CD4-positive, alpha-beta T cell (primary cell): ENCODE measurements at regions of chr12 and their contacts with region 1.

Region 1: GRCh38 chr12:120469450-120470149 is at the start of gene SRSF9:
- DNase-seq: peak; percentile 94 to 99 (median 97)
- ATAC-seq: peak; percentile 86
- H3K4me3 ChIP-seq: peak within 1 kb of the TSS; percentile 57
- H3K4me3 Mint-ChIP-seq: peak within 1 kb of the TSS; percentile 90
- H3K27ac ChIP-seq: peak within 1 kb of the TSS; percentile 72 to 77
- H3K27ac Mint-ChIP-seq: peak within 1 kb of the TSS; percentile 87
- H3K4me1 ChIP-seq: peaks cover 39% of the 10 kb centered on the region
- H3K4me1 Mint-ChIP-seq: peaks cover 46% of the 10 kb centered on the region
- H3K27me3 ChIP-seq: no peaks in the 10 kb centered on the region
- H3K27me3 Mint-ChIP-seq: no peaks in the 10 kb centered on the region
- CTCF ChIP-seq: peak; percentile 91
- total RNA-seq, gene SRSF9: 124 TPM

Region 2: DNA sequence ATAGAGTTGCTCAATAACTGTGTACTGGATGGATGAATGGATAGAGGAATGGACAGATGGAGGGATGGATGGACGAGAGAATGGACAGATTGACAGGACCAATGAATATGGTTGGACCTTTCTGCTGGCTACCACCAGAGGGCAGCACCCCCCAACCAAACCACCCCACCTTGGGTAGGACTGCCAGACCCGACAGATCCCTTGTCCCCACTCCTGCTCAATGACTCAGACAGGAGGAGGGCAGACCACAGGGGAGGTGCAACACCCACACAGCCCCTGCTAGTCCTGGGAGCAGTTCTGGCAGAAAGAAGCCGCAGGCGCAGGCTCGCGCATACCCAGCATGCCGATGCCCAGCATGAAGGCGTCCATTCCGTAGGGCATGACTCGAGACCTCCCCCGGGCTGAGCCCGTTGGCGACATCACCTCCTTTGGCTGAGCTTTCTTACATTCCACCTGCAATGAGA is 113.0 kb before region 1 on chr12:
- CTCF ChIA-PET with region 1: interaction called, 4 read pairs
- POLR2A ChIA-PET with region 1: no interaction called
- intact Hi-C with region 1: loop called (anchors 1 to 2 kb)
- DNase-seq: peak; percentile 56 to 81 (median 65)
- ATAC-seq: peak; percentile 88
- H3K4me3 ChIP-seq: no peak overlapping the region
- H3K4me3 Mint-ChIP-seq: no peak overlapping the region
- H3K27ac ChIP-seq: no peak overlapping the region
- H3K27ac Mint-ChIP-seq: no peak overlapping the region
- H3K4me1 ChIP-seq: peaks cover 5% of the 10 kb centered on the region
- H3K4me1 Mint-ChIP-seq: no peaks in the 10 kb centered on the region
- H3K27me3 ChIP-seq: peaks cover 18 to 28% of the 10 kb centered on the region in 2 experiments
- H3K27me3 Mint-ChIP-seq: peaks cover 54% of the 10 kb centered on the region
- CTCF ChIP-seq: peak; percentile 91

Region 3: GRCh38 chr12:120445911-120446843 is 23.4 kb before region 1 on chr12 and contains the starts of genes GATC and TRIAP1:
- CTCF ChIA-PET with region 1: interaction called, 15 read pairs
- POLR2A ChIA-PET with region 1: interaction called, 6 read pairs
- intact Hi-C with region 1: loop called in 1 of 2 experiments (anchors 2 kb)
- DNase-seq: peak; percentile 68 to 94 (median 83)
- ATAC-seq: peak; percentile 95
- H3K4me3 ChIP-seq: peak within 1 kb of the TSS; percentile 100
- H3K4me3 Mint-ChIP-seq: peak within 1 kb of the TSS; percentile 100
- H3K27ac ChIP-seq: peak within 1 kb of the TSS; percentile 80 to 92
- H3K27ac Mint-ChIP-seq: peak within 1 kb of the TSS; percentile 98
- H3K4me1 ChIP-seq: peaks cover 37% of the 10 kb centered on the region
- H3K4me1 Mint-ChIP-seq: peaks cover 39% of the 10 kb centered on the region
- H3K27me3 ChIP-seq: no peaks in the 10 kb centered on the region
- H3K27me3 Mint-ChIP-seq: no peaks in the 10 kb centered on the region
- CTCF ChIP-seq: no peak
- total RNA-seq, gene GATC: 18.6 to 19.4 TPM
- total RNA-seq, gene TRIAP1: 33.0 to 34.3 TPM

Region 4: GRCh38 chr12:120495723-120496412 is 26.3 kb after region 1 on chr12 and contains the start of gene DYNLL1:
- CTCF ChIA-PET with region 1: interaction called, 14 read pairs
- POLR2A ChIA-PET with region 1: interaction called, 27 read pairs
- intact Hi-C with region 1: loop called (anchors 1 to 2 kb)
- DNase-seq: peak; percentile 95 to 98 (median 97)
- ATAC-seq: peak; percentile 96
- H3K4me3 ChIP-seq: peak within 1 kb of the TSS; percentile 82
- H3K4me3 Mint-ChIP-seq: peak within 1 kb of the TSS; percentile 92
- H3K27ac ChIP-seq: peak within 1 kb of the TSS; percentile 74 to 79
- H3K27ac Mint-ChIP-seq: peak within 1 kb of the TSS; percentile 82
- H3K4me1 ChIP-seq: peaks cover 18% of the 10 kb centered on the region
- H3K4me1 Mint-ChIP-seq: peaks cover 44% of the 10 kb centered on the region
- H3K27me3 ChIP-seq: no peaks in the 10 kb centered on the region
- H3K27me3 Mint-ChIP-seq: no peaks in the 10 kb centered on the region
- CTCF ChIP-seq: no peak
- total RNA-seq, gene DYNLL1: 23.6 to 24.5 TPM

Region 5: DNA sequence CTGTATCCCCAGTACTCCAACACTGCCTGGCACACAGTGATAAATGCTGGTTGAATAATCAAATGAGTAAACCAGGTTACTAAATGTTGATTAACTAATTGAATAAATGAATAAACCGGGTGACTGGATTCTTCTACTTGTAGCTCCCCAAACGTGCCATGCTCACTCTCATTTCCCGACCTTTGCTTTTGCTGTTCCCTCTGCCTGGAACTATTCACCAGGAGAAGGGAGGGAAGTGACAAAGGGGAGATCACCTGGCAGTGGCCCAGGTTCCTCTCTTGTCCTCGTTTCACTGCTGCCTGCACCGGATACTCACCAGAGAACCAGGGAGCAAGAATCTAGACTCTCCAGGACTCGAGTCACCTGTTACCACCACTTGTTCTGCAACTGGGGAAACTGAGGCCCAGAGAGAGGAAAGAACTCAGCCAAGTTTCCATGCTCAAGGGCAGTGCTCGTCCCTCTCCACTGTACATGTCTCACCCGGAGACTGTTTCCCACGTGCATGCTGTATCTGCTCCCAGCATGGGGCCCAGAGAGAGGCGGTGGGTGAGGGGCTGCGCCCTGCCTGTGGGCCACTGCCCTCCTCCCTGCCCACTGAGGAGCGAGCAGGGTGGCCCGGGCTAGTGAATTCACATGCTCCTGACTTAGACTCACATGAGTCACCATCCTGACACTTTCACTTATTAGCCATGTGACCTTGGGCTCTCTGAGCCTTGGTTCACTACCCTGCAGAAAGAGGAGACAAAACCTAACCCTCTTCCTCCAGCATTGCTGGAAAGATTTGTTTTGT is 129.3 kb after region 1 on chr12:
- CTCF ChIA-PET with region 1: no interaction called
- POLR2A ChIA-PET with region 1: no interaction called
- intact Hi-C with region 1: no loop called
- DNase-seq: peak in 2 of 14 experiments; percentile 47 to 56
- ATAC-seq: no peak
- H3K4me3 ChIP-seq: no peak overlapping the region
- H3K4me3 Mint-ChIP-seq: no peak overlapping the region
- H3K27ac ChIP-seq: no peak overlapping the region
- H3K27ac Mint-ChIP-seq: no peak overlapping the region
- H3K4me1 ChIP-seq: no peaks in the 10 kb centered on the region
- H3K4me1 Mint-ChIP-seq: no peaks in the 10 kb centered on the region
- H3K27me3 ChIP-seq: peaks cover 3 to 4% of the 10 kb centered on the region in 2 experiments
- H3K27me3 Mint-ChIP-seq: peaks cover 21% of the 10 kb centered on the region
- CTCF ChIP-seq: no peak

Region 6: DNA sequence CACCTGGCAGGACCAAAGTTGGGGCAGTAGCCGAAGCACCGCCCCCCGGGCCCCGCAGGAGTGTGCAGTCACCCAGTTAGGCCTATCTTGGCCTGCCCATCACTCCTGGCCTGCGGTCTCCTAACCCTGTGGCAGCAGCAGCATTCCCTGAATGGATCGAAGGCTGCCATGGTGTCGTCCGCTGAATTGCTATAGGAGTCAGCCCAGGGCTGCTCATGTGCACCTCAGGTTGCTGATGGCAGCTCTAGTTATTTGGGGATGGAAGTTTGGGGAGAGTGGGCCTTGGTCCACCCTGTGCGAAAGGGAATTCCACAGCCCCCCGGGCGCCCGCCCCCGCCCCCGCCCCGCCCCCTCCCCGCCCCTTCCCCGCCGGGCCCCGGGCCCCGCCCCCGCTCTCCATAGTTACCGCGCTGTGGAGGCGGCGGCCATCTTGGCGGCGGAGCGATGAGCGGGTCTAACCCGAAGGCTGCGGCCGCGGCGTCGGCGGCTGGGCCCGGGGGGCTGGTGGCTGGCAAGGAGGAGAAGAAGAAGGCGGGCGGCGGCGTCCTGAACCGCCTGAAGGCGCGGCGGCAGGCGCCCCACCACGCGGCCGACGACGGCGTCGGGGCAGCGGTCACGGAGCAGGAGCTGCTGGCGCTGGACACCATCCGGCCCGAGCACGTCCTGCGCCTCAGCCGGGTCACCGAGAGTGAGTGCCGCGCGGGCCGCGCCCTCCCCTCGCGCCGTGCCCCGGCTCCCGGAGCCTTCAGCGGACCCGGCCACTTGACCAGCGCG is 240.6 kb after region 1 on chr12 and contains the start of gene UNC119B:
- CTCF ChIA-PET with region 1: no interaction called
- POLR2A ChIA-PET with region 1: no interaction called
- intact Hi-C with region 1: loop called in 1 of 2 experiments (anchors 10 kb)
- DNase-seq: peak; percentile 57 to 87 (median 70)
- ATAC-seq: peak; percentile 86
- H3K4me3 ChIP-seq: peak within 1 kb of the TSS; percentile 83
- H3K4me3 Mint-ChIP-seq: peak within 1 kb of the TSS; percentile 96
- H3K27ac ChIP-seq: peak within 1 kb of the TSS; percentile 13 to 58
- H3K27ac Mint-ChIP-seq: peak within 1 kb of the TSS; percentile 86
- H3K4me1 ChIP-seq: peaks cover 30% of the 10 kb centered on the region
- H3K4me1 Mint-ChIP-seq: peaks cover 42% of the 10 kb centered on the region
- H3K27me3 ChIP-seq: no peaks in the 10 kb centered on the region
- H3K27me3 Mint-ChIP-seq: no peaks in the 10 kb centered on the region
- CTCF ChIP-seq: no peak
- total RNA-seq, gene UNC119B: 10.7 TPM